CD4-positive, alpha-beta memory T cell (primary cell): ENCODE measurements at regions of chr10 and their contacts with region 1.

Region 1: GRCh38 chr10:12195603-12196506 is at the starts of genes CDC123 and NUDT5:
- DNase-seq: peak; percentile 85 to 89 (median 88)
- H3K4me3 ChIP-seq: peak within 1 kb of the TSS; percentile 78 to 93
- H3K4me3 Mint-ChIP-seq: peak within 1 kb of the TSS; percentile 95 to 99 (median 98)
- H3K27ac ChIP-seq: peak within 1 kb of the TSS; percentile 96
- H3K27ac Mint-ChIP-seq: peak within 1 kb of the TSS; percentile 97 to 100 (median 99)
- H3K4me1 ChIP-seq: peaks cover 43% of the 10 kb centered on the region
- H3K4me1 Mint-ChIP-seq: peaks cover 36 to 72% (median 54%) of the 10 kb centered on the region in 4 donors
- H3K27me3 ChIP-seq: no peaks in the 10 kb centered on the region
- H3K27me3 Mint-ChIP-seq: no peaks in the 10 kb centered on the region
- total RNA-seq, gene CDC123: 40.7 to 41.8 TPM
- total RNA-seq, gene NUDT5: 55.6 to 61.2 TPM

Region 2: DNA sequence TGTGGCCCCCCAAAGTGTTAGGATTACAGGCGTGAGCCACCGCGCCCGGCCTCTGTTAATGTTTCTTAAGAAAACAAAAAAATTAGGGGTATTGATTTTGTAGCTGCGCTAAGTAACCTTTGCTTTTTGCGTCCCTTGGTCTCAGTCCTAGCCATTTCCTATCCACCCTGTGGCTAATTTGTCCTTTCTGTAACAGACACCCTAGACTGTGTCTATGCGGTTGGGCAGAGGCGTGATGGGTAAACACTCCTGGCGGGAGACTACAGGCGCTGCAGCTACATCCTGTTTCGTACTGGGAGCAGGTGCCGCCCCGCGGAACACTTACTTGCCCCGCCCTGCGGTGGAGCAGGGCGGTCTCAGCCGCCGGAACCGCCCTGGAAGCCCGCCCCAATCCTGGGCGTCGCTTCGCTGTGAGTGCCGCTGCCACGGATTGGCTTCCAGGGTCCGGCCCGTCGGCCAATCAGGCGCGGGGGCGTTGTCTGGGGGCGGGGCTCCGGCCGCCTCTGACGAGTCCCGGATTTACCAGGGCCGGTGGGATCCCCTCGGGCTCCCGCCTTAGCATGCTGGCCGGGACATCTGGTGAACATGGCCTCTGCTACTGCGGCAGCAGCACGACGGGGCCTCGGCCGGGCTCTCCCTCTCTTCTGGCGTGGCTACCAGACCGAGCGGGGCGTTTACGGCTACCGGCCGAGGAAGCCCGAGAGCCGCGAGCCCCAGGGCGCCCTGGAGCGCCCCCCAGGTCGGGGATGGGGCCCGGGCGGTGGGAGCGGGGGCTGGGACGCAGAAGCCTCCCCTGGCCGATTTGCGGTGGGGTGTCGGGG is 127.2 kb before region 1 on chr10 and contains the start of gene DHTKD1:
- CTCF ChIA-PET with region 1: no interaction called
- POLR2A ChIA-PET with region 1: interaction called, 8 read pairs
- intact Hi-C with region 1: loop called (anchors 1 kb)
- DNase-seq: peak; percentile 97 to 98 (median 97)
- H3K4me3 ChIP-seq: peak within 1 kb of the TSS; percentile 52 to 83
- H3K4me3 Mint-ChIP-seq: peak within 1 kb of the TSS; percentile 85 to 93 (median 89)
- H3K27ac ChIP-seq: peak within 1 kb of the TSS; percentile 83
- H3K27ac Mint-ChIP-seq: peak within 1 kb of the TSS; percentile 70 to 97 (median 96)
- H3K4me1 ChIP-seq: peaks cover 16% of the 10 kb centered on the region
- H3K4me1 Mint-ChIP-seq: peaks cover 11 to 24% (median 18%) of the 10 kb centered on the region in 4 donors
- H3K27me3 ChIP-seq: no peaks in the 10 kb centered on the region
- H3K27me3 Mint-ChIP-seq: peaks cover 0 to 2% of the 10 kb centered on the region in 2 donors
- total RNA-seq, gene DHTKD1: 15.7 to 16.5 TPM

Region 3: DNA sequence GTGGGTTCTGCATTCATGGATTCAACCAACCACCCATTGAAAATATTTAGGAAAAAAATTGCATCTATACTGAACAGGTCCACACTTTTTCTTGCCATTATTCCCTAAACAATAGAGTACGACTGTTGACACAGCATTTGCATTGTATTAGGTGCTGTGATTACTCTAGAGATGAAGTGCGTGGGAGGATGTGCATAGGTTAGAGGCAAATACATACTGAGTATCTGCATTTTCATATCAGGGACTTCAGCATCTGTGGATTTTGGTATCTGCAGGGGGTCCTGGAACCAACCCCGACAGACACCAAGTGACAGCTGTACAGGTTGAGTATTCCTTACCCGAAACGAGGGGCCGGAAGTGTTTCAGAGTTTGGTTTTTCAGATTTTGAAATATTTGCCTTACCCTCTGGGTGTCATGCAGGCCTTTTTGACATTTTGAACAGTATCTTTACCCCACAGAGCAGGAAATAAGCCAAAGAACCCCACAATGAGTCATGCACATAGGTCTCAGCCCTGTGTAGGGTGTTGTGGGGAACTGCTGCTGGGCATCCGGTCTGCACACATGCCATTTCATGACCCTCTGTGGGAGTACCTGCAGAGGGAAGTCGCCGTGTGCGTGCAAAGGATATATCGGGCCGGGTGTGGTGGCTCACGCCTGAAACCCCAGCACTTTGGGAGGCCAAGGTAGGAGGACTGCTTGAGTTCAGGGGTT is 14.6 kb before region 1 on chr10:
- CTCF ChIA-PET with region 1: interaction called, 17 read pairs
- POLR2A ChIA-PET with region 1: interaction called, 40 read pairs
- intact Hi-C with region 1: loop called (anchors 1 kb)
- DNase-seq: peak; percentile 68 to 89 (median 79)
- H3K4me3 ChIP-seq: no peak overlapping the region
- H3K4me3 Mint-ChIP-seq: peak overlapping the region in 6 of 8 donors; percentile 54 to 77 (median 62)
- H3K27ac ChIP-seq: peak overlapping the region; percentile 32
- H3K27ac Mint-ChIP-seq: peak overlapping the region; percentile 84 to 95 (median 92)
- H3K4me1 ChIP-seq: peaks cover 27% of the 10 kb centered on the region
- H3K4me1 Mint-ChIP-seq: peaks cover 15 to 29% (median 24%) of the 10 kb centered on the region in 4 donors
- H3K27me3 ChIP-seq: no peaks in the 10 kb centered on the region
- H3K27me3 Mint-ChIP-seq: no peaks in the 10 kb centered on the region

Region 4: GRCh38 chr10:12241810-12242529 is 46.1 kb after region 1 on chr10:
- CTCF ChIA-PET with region 1: no interaction called
- POLR2A ChIA-PET with region 1: no interaction called
- intact Hi-C with region 1: no loop called
- DNase-seq: no peak
- H3K4me3 ChIP-seq: no peak overlapping the region
- H3K4me3 Mint-ChIP-seq: peak overlapping the region in 2 of 8 donors; percentile 37 to 46
- H3K27ac ChIP-seq: no peak overlapping the region
- H3K27ac Mint-ChIP-seq: peak overlapping the region; percentile 73 to 95 (median 90)
- H3K4me1 ChIP-seq: no peaks in the 10 kb centered on the region
- H3K4me1 Mint-ChIP-seq: peaks cover 10 to 25% (median 15%) of the 10 kb centered on the region in 4 donors
- H3K27me3 ChIP-seq: no peaks in the 10 kb centered on the region
- H3K27me3 Mint-ChIP-seq: no peaks in the 10 kb centered on the region